H1 (cell line): ENCODE measurements at regions of chr12 and their contacts with region 1.

Region 1: GRCh38 chr12:452667-453210 is 7.0 kb upstream of the B4GALNT3 start:
- DNase-seq: peak in 1 of 2 experiments; percentile 80
- H3K4me3 ChIP-seq: peak overlapping the region in 1 of 4 experiments; percentile 27; a peak in 1 of 8 replicates
- H3K27ac ChIP-seq: no peak overlapping the region
- H3K4me1 ChIP-seq: no peaks in the 10 kb centered on the region
- H3K27me3 ChIP-seq: no peaks in the 10 kb centered on the region; a peak in 2 of 7 replicates
- CTCF ChIP-seq: peak in 2 of 3 experiments; percentile 41 to 57; a peak in 2 of 4 replicates
- EP300 ChIP-seq: no peak
- POLR2A ChIP-seq: no peak
- RAD21 ChIP-seq: no peak

Region 2: GRCh38 chr12:401235-402028 is 51.3 kb before region 1 on chr12 and contains the start of gene CCDC77:
- CTCF ChIA-PET with region 1: no interaction called
- POLR2A ChIA-PET with region 1: no interaction called
- DNase-seq: peak; percentile 80 to 96
- H3K4me3 ChIP-seq: peak within 1 kb of the TSS; percentile 81 to 99 (median 86)
- H3K27ac ChIP-seq: peak within 1 kb of the TSS; percentile 54
- H3K4me1 ChIP-seq: no peaks in the 10 kb centered on the region; a peak in 1 of 7 replicates
- H3K27me3 ChIP-seq: no peaks in the 10 kb centered on the region
- CTCF ChIP-seq: no peak
- EP300 ChIP-seq: no peak
- POLR2A ChIP-seq: peak; percentile 45 to 91
- RAD21 ChIP-seq: no peak
- total RNA-seq, gene CCDC77: 29.3 and 30.4 TPM in 2 replicates

Region 3: GRCh38 chr12:442235-442884 is 10.4 kb before region 1 on chr12:
- CTCF ChIA-PET with region 1: interaction called, 33 read pairs
- POLR2A ChIA-PET with region 1: interaction called, 3 read pairs
- DNase-seq: peak in 1 of 2 experiments; percentile 88
- H3K4me3 ChIP-seq: no peak overlapping the region
- H3K27ac ChIP-seq: no peak overlapping the region
- H3K4me1 ChIP-seq: no peaks in the 10 kb centered on the region
- H3K27me3 ChIP-seq: no peaks in the 10 kb centered on the region
- CTCF ChIP-seq: peak; percentile 41 to 86 (median 76)
- EP300 ChIP-seq: no peak
- POLR2A ChIP-seq: no peak
- RAD21 ChIP-seq: peak; percentile 64 to 77

Region 4: GRCh38 chr12:470133-470532 is 17.4 kb after region 1 on chr12:
- CTCF ChIA-PET with region 1: interaction called, 28 read pairs
- POLR2A ChIA-PET with region 1: interaction called, 3 read pairs
- DNase-seq: no peak
- H3K4me3 ChIP-seq: no peak overlapping the region
- H3K27ac ChIP-seq: no peak overlapping the region
- H3K4me1 ChIP-seq: peaks cover 0 to 5% (median 0%) of the 10 kb centered on the region in 4 experiments; a peak in 1 of 7 replicates
- H3K27me3 ChIP-seq: no peaks in the 10 kb centered on the region
- CTCF ChIP-seq: no peak
- EP300 ChIP-seq: no peak
- POLR2A ChIP-seq: no peak
- RAD21 ChIP-seq: no peak

Region 5: DNA sequence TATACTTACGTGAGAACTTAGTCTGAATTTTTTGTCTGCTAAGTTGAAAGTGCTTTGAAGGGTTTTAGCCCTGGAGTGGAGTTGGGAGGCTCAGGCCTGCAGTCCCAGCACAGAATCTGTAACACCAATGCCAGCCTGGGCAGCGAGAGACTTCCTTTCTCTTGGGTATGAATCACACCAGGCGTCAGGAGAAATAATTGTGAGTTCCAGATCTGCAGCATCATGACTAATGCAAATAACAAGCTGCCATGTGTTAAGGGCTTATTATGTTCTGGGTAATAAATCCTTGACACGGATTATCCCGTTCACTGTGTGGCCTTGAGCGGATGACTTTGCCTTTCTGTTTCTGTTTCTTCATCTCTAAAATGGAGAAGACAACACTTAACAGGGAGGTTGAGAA is 77.6 kb after region 1 on chr12:
- CTCF ChIA-PET with region 1: interaction called, 163 read pairs
- POLR2A ChIA-PET with region 1: no interaction called
- DNase-seq: no peak
- H3K4me3 ChIP-seq: no peak overlapping the region
- H3K27ac ChIP-seq: no peak overlapping the region
- H3K4me1 ChIP-seq: peaks cover 0 to 3% (median 0%) of the 10 kb centered on the region in 4 experiments; a peak in 1 of 7 replicates
- H3K27me3 ChIP-seq: no peaks in the 10 kb centered on the region
- CTCF ChIP-seq: no peak
- EP300 ChIP-seq: no peak
- POLR2A ChIP-seq: no peak
- RAD21 ChIP-seq: no peak

Region 6: DNA sequence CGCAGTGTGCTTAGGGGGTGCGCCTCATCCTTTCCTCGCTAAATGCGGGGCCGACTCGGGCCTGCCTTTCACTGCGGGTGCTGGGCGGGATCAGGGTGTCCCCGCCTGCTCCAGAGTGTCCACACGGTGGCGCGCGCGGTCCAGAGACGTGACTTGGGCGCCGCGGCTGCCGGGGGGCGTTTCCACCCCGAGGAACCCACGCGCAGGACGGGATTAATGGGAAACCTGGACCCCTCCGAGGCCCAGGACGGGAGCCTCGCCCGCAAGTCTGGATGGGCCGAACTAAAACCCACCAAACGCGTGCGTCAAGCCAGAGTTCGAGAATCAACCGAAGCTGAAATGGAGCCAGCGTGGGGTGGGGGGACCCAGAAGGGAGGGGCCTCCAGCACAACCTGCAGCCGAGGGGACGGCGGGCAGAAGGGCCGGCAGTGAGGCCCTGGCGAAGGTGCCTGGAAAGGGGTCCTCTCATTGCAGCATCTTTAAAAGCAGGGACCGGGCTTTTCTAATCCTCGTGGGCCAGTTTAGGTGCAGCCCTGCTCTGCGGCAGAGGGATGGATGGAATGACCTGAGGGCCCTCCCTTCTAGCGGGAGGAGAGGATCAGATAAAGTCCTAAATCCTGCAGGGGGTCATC is 117.2 kb after region 1 on chr12:
- CTCF ChIA-PET with region 1: interaction called, 18 read pairs
- POLR2A ChIA-PET with region 1: no interaction called
- DNase-seq: peak in 1 of 2 experiments; percentile 95
- H3K4me3 ChIP-seq: peak overlapping the region; percentile 28 to 82 (median 64)
- H3K27ac ChIP-seq: no peak overlapping the region
- H3K4me1 ChIP-seq: peaks cover 0 to 9% (median 6%) of the 10 kb centered on the region in 4 experiments; a peak in 5 of 7 replicates
- H3K27me3 ChIP-seq: peaks cover 0 to 4% (median 3%) of the 10 kb centered on the region in 4 experiments; a peak in 2 of 7 replicates
- CTCF ChIP-seq: peak in 2 of 3 experiments; percentile 86; a peak in 3 of 4 replicates
- EP300 ChIP-seq: no peak
- POLR2A ChIP-seq: no peak
- RAD21 ChIP-seq: peak; percentile 86 to 88

Region 7: DNA sequence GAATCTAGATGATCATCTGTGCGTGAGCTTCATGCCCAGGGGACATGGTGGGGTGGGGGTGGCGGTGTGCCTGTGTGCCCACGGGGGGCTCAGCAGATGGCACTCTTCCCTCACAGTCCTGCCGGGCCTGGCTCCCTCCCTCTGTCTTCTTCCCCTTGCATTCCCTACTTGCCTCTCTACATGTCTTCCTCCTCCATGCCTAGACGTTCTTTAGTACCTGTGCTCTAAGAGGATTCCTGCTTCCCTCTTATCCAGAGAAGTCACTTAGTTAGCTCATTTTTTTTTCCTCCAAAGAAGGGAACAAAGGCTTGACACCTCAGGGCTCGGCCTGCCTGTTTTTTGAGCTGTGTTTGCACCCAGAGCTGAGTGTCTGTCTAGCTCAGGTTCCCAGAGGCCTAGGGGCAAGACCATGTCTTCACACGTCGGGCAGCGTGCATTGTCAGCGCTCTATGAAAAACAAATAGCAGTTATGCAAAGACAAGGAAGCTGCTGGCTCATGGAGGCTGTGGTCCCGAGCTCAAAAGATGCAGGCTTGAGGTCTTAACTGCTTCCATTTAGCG is 161.8 kb after region 1 on chr12:
- CTCF ChIA-PET with region 1: no interaction called
- POLR2A ChIA-PET with region 1: no interaction called
- DNase-seq: peak in 1 of 2 experiments; percentile 53
- H3K4me3 ChIP-seq: no peak overlapping the region
- H3K27ac ChIP-seq: no peak overlapping the region
- H3K4me1 ChIP-seq: no peaks in the 10 kb centered on the region
- H3K27me3 ChIP-seq: no peaks in the 10 kb centered on the region
- CTCF ChIP-seq: peak; percentile 53 to 61 (median 57)
- EP300 ChIP-seq: no peak
- POLR2A ChIP-seq: no peak
- RAD21 ChIP-seq: peak; percentile 77 to 86